ENCODE measurements at regions of chr4 and their contacts with region 1.

Region 1: GRCh38 chr4:6180841-6181631 is 19.3 kb downstream of the JAKMIP1 start:
- DNase-seq: peak; percentile 21 to 84
- ATAC-seq: peak; percentile 72 to 82 (median 80)
- H3K4me3 ChIP-seq: no peak overlapping the region
- H3K4me3 Mint-ChIP-seq: peak overlapping the region; percentile 45
- H3K27ac ChIP-seq: peak overlapping the region; percentile 45
- H3K27ac Mint-ChIP-seq: peak overlapping the region; percentile 31 to 92
- H3K4me1 ChIP-seq: peaks cover 73% of the 10 kb centered on the region
- H3K4me1 Mint-ChIP-seq: peaks cover 49 to 67% of the 10 kb centered on the region in 2 donors
- H3K27me3 ChIP-seq: no peaks in the 10 kb centered on the region
- H3K27me3 Mint-ChIP-seq: peaks cover 3% of the 10 kb centered on the region in 2 donors
- CTCF ChIP-seq: no peak

Region 2: DNA sequence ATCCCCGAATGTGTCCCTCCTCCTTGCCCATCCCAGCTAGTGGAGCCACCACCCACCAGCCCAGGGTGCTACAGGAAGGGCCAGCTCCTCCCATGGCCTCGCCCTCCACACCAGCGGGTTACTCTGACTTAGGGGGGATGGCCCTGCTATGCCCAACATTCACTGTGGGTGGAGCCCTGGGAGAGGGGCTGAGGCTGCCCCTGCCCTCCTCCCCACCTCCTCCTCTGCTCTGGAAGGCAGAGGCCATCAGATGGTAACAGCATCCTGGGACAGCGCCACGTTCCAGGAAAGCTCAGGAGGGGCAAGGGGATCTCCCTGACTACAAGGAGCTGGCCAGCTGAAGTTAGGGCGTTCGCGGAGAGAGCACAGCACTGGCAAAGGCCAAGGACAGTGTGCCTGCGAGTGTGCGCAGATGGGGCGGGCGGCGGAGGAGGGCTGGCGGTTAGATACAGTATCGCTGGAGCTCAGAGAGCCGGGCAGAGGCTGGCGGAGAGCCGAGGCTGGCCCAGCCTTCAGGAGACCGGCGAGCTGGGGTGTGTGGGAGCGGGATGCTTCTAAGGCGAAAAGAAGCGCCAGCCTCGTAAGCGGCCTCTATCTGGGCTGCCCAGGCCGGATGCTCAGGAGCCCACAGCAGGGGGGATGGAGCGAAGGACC is 17.9 kb after region 1 on chr4:
- intact Hi-C with region 1: loop called (anchors 1 kb)
- DNase-seq: peak in 1 of 2 donors; percentile 52
- ATAC-seq: peak; percentile 13 to 33 (median 15)
- H3K4me3 ChIP-seq: peak overlapping the region; percentile 31
- H3K4me3 Mint-ChIP-seq: peak overlapping the region; percentile 79
- H3K27ac ChIP-seq: peak overlapping the region; percentile 56
- H3K27ac Mint-ChIP-seq: peak overlapping the region; percentile 76 to 96
- H3K4me1 ChIP-seq: peaks cover 49% of the 10 kb centered on the region
- H3K4me1 Mint-ChIP-seq: peaks cover 25 to 44% of the 10 kb centered on the region in 2 donors
- H3K27me3 ChIP-seq: peaks cover 4% of the 10 kb centered on the region
- H3K27me3 Mint-ChIP-seq: peaks cover 13 to 28% of the 10 kb centered on the region in 2 donors
- CTCF ChIP-seq: no peak

Measured in natural killer cell (primary cell).